CD8-positive, alpha-beta T cell (primary cell): ENCODE measurements at regions of chr6 and their contacts with region 1.

Region 1: GRCh38 chr6:3068329-3069214 is at the start of gene RIPK1:
- DNase-seq: peak; percentile 85 to 98 (median 93)
- ATAC-seq: peak; percentile 74
- H3K4me3 ChIP-seq: peak within 1 kb of the TSS; percentile 67 to 95
- H3K4me3 Mint-ChIP-seq: peak within 1 kb of the TSS; percentile 98
- H3K27ac ChIP-seq: peak within 1 kb of the TSS; percentile 93 to 96
- H3K27ac Mint-ChIP-seq: peak within 1 kb of the TSS; percentile 99
- H3K4me1 ChIP-seq: peaks cover 39% of the 10 kb centered on the region
- H3K4me1 Mint-ChIP-seq: peaks cover 62% of the 10 kb centered on the region
- H3K27me3 ChIP-seq: no peaks in the 10 kb centered on the region
- H3K27me3 Mint-ChIP-seq: no peaks in the 10 kb centered on the region
- CTCF ChIP-seq: peak; percentile 33
- total RNA-seq, gene RIPK1: 18.6 to 19.7 TPM

Region 2: GRCh38 chr6:3052481-3053230 is 15.9 kb before region 1 on chr6:
- CTCF ChIA-PET with region 1: interaction called, 4 read pairs
- POLR2A ChIA-PET with region 1: interaction called, 6 read pairs
- intact Hi-C with region 1: loop called in 1 of 2 experiments (anchors 1 kb)
- DNase-seq: no peak
- ATAC-seq: no peak
- H3K4me3 ChIP-seq: no peak overlapping the region
- H3K4me3 Mint-ChIP-seq: peak overlapping the region; percentile 70
- H3K27ac ChIP-seq: no peak overlapping the region
- H3K27ac Mint-ChIP-seq: no peak overlapping the region
- H3K4me1 ChIP-seq: peaks cover 8% of the 10 kb centered on the region
- H3K4me1 Mint-ChIP-seq: peaks cover 13% of the 10 kb centered on the region
- H3K27me3 ChIP-seq: no peaks in the 10 kb centered on the region
- H3K27me3 Mint-ChIP-seq: no peaks in the 10 kb centered on the region
- CTCF ChIP-seq: no peak

Region 3: GRCh38 chr6:3118353-3119039 is 49.9 kb after region 1 on chr6 and contains the start of gene BPHL:
- CTCF ChIA-PET with region 1: interaction called, 3 read pairs
- POLR2A ChIA-PET with region 1: interaction called, 7 read pairs
- intact Hi-C with region 1: loop called (anchors 1 kb)
- DNase-seq: peak; percentile 97 to 100 (median 99)
- ATAC-seq: peak; percentile 95
- H3K4me3 ChIP-seq: peak within 1 kb of the TSS; percentile 63 to 80
- H3K4me3 Mint-ChIP-seq: peak within 1 kb of the TSS; percentile 92
- H3K27ac ChIP-seq: peak within 1 kb of the TSS; percentile 85 to 90
- H3K27ac Mint-ChIP-seq: peak within 1 kb of the TSS; percentile 96
- H3K4me1 ChIP-seq: peaks cover 12% of the 10 kb centered on the region
- H3K4me1 Mint-ChIP-seq: peaks cover 13% of the 10 kb centered on the region
- H3K27me3 ChIP-seq: no peaks in the 10 kb centered on the region
- H3K27me3 Mint-ChIP-seq: no peaks in the 10 kb centered on the region
- CTCF ChIP-seq: no peak
- total RNA-seq, gene BPHL: 3.7 to 5.5 TPM

Region 4: GRCh38 chr6:3157131-3157927 is 88.8 kb after region 1 on chr6 and contains the start of gene TUBB2A:
- CTCF ChIA-PET with region 1: no interaction called
- POLR2A ChIA-PET with region 1: no interaction called
- intact Hi-C with region 1: loop called (anchors 1 to 2 kb)
- DNase-seq: peak; percentile 77 to 94 (median 88)
- ATAC-seq: peak; percentile 61
- H3K4me3 ChIP-seq: peak within 1 kb of the TSS; percentile 65
- H3K4me3 Mint-ChIP-seq: peak within 1 kb of the TSS; percentile 92
- H3K27ac ChIP-seq: peak within 1 kb of the TSS; percentile 73 to 84
- H3K27ac Mint-ChIP-seq: peak within 1 kb of the TSS; percentile 91
- H3K4me1 ChIP-seq: peaks cover 29% of the 10 kb centered on the region
- H3K4me1 Mint-ChIP-seq: peaks cover 36% of the 10 kb centered on the region
- H3K27me3 ChIP-seq: no peaks in the 10 kb centered on the region
- H3K27me3 Mint-ChIP-seq: peaks cover 2% of the 10 kb centered on the region
- CTCF ChIP-seq: peak; percentile 65
- total RNA-seq, gene TUBB2A: 61.4 to 63.9 TPM

Region 5: GRCh38 chr6:3162565-3163247 is 94.1 kb after region 1 on chr6:
- CTCF ChIA-PET with region 1: no interaction called
- POLR2A ChIA-PET with region 1: no interaction called
- intact Hi-C with region 1: loop called (anchors 1 to 2 kb)
- DNase-seq: peak; percentile 12 to 84 (median 63)
- ATAC-seq: peak; percentile 47
- H3K4me3 ChIP-seq: peak overlapping the region; percentile 71 to 79
- H3K4me3 Mint-ChIP-seq: peak overlapping the region; percentile 84
- H3K27ac ChIP-seq: peak overlapping the region in 1 of 2 experiments; percentile 72
- H3K27ac Mint-ChIP-seq: peak overlapping the region; percentile 86
- H3K4me1 ChIP-seq: peaks cover 33% of the 10 kb centered on the region
- H3K4me1 Mint-ChIP-seq: peaks cover 37% of the 10 kb centered on the region
- H3K27me3 ChIP-seq: no peaks in the 10 kb centered on the region
- H3K27me3 Mint-ChIP-seq: no peaks in the 10 kb centered on the region
- CTCF ChIP-seq: no peak

Region 6: GRCh38 chr6:5003604-5004372 is 1935.2 kb after region 1 on chr6 and contains the start of gene RPP40:
- CTCF ChIA-PET with region 1: no interaction called
- POLR2A ChIA-PET with region 1: no interaction called
- intact Hi-C with region 1: loop called in 1 of 2 experiments (anchors 10 kb)
- DNase-seq: peak; percentile 97 to 99 (median 98)
- ATAC-seq: peak; percentile 94
- H3K4me3 ChIP-seq: peak within 1 kb of the TSS; percentile 80 to 95
- H3K4me3 Mint-ChIP-seq: peak within 1 kb of the TSS; percentile 94
- H3K27ac ChIP-seq: peak within 1 kb of the TSS; percentile 79 to 82
- H3K27ac Mint-ChIP-seq: peak within 1 kb of the TSS; percentile 97
- H3K4me1 ChIP-seq: peaks cover 8% of the 10 kb centered on the region
- H3K4me1 Mint-ChIP-seq: peaks cover 13% of the 10 kb centered on the region
- H3K27me3 ChIP-seq: no peaks in the 10 kb centered on the region
- H3K27me3 Mint-ChIP-seq: no peaks in the 10 kb centered on the region
- CTCF ChIP-seq: peak; percentile 84
- total RNA-seq, gene RPP40: 0.94 to 1.2 TPM